ENCODE measurements at regions of chr11 and their contacts with region 1.

Region 1: GRCh38 chr11:7555052-7555699 is 41.4 kb downstream of the PPFIBP2 start:
- DNase-seq: peak; percentile 84 to 87
- ATAC-seq: peak; percentile 97
- H3K4me3 ChIP-seq: no peak overlapping the region
- H3K27ac ChIP-seq: peak overlapping the region; percentile 80 to 89 (median 82)
- H3K4me1 ChIP-seq: peaks cover 48 to 60% of the 10 kb centered on the region in 2 donors
- H3K27me3 ChIP-seq: no peaks in the 10 kb centered on the region
- CTCF ChIP-seq: no peak
- POLR2A ChIP-seq: no peak

Region 2: GRCh38 chr11:7612661-7613393 is 57.7 kb after region 1 on chr11:
- in situ Hi-C with region 1: no loop called
- intact Hi-C with region 1: loop called (anchors 10 kb)
- DNase-seq: no peak
- ATAC-seq: peak in 1 of 2 donors; percentile 25
- H3K4me3 ChIP-seq: no peak overlapping the region
- H3K27ac ChIP-seq: peak overlapping the region in 2 of 4 donors; percentile 2 to 39
- H3K4me1 ChIP-seq: peaks cover 18 to 33% of the 10 kb centered on the region in 2 donors
- H3K27me3 ChIP-seq: no peaks in the 10 kb centered on the region
- CTCF ChIP-seq: no peak
- POLR2A ChIP-seq: no peak

Measured in gastrocnemius medialis (tissue), 4 donors.